Activated CD4-positive, alpha-beta memory T cell treated with anti-CD3 and anti-CD28 coated beads for 36 hours (primary cell): ENCODE measurements at regions of chr20 and their contacts with region 1.

Region 1: DNA sequence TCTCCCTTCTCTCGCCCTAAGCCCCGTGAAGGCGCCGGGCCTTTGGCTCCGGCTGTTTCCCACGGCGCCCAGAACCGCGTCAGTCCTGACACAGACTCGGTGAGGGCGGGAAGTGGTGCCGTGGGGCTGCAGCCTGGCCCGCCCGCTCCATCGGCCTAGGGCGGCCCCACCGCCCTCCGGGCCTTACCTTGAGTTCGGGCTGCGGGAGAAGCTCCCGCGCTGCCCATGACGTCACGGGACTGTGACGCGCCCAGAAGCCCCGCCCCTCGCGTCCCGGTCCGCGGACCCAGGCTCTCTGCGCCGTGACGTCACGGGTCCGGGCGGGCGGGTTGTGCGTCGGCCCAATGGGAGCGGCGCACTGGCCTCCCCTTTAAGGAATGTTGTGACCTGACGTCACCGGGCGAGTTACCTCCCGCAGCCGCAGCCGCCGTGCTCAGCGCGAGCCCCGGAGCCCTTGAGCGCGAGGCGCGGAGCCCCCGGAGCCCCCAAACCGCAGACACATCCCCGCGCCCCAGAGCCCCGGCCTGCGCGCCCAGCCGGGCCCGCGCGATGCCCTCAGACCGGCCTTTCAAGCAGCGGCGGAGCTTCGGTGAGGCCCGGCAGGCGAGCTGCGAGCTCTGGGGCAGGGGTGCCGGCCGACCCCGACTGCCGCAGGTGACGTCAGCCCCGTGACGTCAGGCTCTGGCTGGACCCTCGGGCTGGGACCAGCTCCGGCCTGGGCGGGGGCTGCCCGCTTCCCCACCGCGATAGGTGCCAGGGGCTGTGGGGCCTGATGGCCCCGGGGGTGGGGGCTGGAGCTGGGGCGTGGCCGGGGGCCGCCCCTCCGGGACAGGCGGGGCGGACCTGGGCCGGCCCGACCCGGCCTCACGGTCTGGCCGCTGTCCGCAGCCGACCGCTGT is at the start of gene MAP1LC3A:
- DNase-seq: peak; percentile 95
- H3K4me3 Mint-ChIP-seq: peak within 1 kb of the TSS; percentile 83
- H3K27ac Mint-ChIP-seq: peak within 1 kb of the TSS; percentile 80
- H3K4me1 Mint-ChIP-seq: peaks cover 16% of the 10 kb centered on the region
- H3K27me3 Mint-ChIP-seq: no peaks in the 10 kb centered on the region
- total RNA-seq, gene MAP1LC3A: 4.6 to 5.6 TPM

Region 2: GRCh38 chr20:34530342-34530741 is 28.2 kb before region 1 on chr20:
- CTCF ChIA-PET with region 1: no interaction called
- POLR2A ChIA-PET with region 1: no interaction called
- intact Hi-C with region 1: no loop called
- DNase-seq: no peak
- H3K4me3 Mint-ChIP-seq: no peak overlapping the region
- H3K27ac Mint-ChIP-seq: no peak overlapping the region
- H3K4me1 Mint-ChIP-seq: peaks cover 2% of the 10 kb centered on the region
- H3K27me3 Mint-ChIP-seq: no peaks in the 10 kb centered on the region

Region 3: DNA sequence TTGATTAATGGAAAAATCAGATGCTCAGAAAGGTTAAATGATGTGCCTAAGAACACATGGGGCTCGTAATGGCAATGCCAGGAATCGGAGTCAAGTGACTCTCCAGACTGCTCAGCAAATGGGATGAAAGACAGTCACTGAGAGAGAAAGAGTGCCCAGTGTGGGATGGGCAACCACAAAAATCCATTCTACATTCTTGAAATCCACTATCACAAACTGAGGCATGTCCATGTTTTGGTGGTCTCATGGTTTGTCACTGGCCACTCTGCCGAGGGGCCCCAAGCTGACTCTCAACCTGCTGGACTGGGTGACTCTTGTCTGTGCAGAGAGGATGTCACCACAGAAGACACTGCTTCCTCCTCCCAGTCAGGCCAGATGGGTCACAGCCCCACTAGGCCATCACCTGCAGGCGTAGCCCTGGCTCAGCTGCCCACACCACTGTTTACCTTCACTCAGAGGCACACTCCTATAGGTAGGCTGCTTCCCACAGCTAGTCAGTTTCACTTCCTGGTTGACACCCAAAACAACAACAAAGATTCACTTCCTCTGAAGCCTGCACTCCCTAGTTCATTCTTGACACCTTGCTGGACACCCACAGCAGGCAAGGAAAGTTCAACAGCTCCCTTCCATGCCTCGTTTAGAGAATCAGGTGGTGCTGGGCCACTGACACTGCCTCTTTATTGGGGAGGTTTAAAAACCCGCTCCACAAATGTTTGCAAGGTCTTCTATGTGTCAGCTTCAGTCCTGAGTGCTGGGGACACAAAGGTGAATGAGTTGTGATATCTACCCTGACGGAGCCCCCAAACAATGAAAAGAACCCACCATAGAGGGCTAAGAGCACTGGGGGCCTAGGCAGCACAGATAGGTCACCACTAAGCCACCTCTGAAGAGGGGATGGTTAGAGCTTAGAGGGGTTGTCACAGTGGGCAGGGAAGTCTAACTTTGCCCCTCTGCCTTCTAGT is 21.7 kb after region 1 on chr20:
- CTCF ChIA-PET with region 1: no interaction called
- POLR2A ChIA-PET with region 1: no interaction called
- intact Hi-C with region 1: loop called (anchors 2 kb)
- DNase-seq: peak; percentile 49
- H3K4me3 Mint-ChIP-seq: no peak overlapping the region
- H3K27ac Mint-ChIP-seq: peak overlapping the region; percentile 92
- H3K4me1 Mint-ChIP-seq: peaks cover 31% of the 10 kb centered on the region
- H3K27me3 Mint-ChIP-seq: no peaks in the 10 kb centered on the region